A549 (cell line): ENCODE measurements at regions of chr7 and their contacts with region 1.

Region 1: GRCh38 chr7:141014524-141015395 is at the start of gene MRPS33:
- DNase-seq: peak; percentile 97 to 98
- ATAC-seq: peak; percentile 98 to 100
- H3K4me3 ChIP-seq: peak within 1 kb of the TSS; percentile 56
- H3K27ac ChIP-seq: peak within 1 kb of the TSS; percentile 85 to 88
- H3K4me1 ChIP-seq: peaks cover 13% of the 10 kb centered on the region
- CTCF ChIP-seq: peak; percentile 61
- EP300 ChIP-seq: no peak
- POLR2A ChIP-seq: peak; percentile 80
- RAD21 ChIP-seq: peak; percentile 14 to 50; a peak in 3 of 5 replicates
- polyA plus RNA-seq, gene MRPS33: 174 and 186 TPM in 2 replicates

Region 2: DNA sequence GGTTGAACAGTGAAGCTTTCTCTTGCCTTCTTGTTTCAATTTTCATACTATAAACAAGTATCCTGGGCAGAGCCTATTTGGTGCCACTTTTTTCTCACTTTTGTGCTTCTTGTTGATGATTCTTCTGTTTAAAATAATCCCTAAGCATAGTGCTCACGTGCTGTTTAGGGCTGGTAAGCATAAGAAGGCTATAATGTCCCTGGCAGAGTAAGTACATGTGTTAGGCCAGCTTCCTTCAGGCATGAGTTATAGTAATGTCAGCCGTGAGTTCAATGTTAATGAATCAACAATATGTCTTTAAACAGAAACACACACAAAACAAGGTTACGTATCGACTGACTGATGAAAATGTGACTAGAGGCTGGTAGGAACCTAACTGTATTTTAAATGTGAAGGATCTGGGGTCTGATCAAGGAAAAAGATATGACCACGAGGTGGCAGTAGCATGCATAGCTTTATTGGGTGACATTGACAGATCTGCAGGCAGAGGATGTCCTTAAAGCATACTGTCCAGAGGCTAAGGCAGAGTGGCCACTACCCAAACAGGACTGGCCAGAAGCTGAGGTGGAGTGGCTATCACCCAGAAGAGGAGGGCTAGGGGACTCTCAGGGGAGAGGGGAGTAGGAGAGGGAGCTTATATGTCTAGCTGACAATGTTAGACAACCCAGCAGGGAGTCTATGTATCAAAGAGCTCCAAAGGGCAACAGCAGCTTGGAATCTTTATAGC is 203.8 kb before region 1 on chr7:
- CTCF ChIA-PET with region 1: interaction called, 32 read pairs
- POLR2A ChIA-PET with region 1: interaction called, 15 read pairs
- DNase-seq: peak; percentile 52 to 75
- ATAC-seq: peak; percentile 100
- H3K4me3 ChIP-seq: no peak overlapping the region
- H3K27ac ChIP-seq: no peak overlapping the region
- H3K4me1 ChIP-seq: no peaks in the 10 kb centered on the region
- CTCF ChIP-seq: peak; percentile 85
- EP300 ChIP-seq: no peak
- POLR2A ChIP-seq: no peak
- RAD21 ChIP-seq: peak; percentile 76 to 81

Region 3: DNA sequence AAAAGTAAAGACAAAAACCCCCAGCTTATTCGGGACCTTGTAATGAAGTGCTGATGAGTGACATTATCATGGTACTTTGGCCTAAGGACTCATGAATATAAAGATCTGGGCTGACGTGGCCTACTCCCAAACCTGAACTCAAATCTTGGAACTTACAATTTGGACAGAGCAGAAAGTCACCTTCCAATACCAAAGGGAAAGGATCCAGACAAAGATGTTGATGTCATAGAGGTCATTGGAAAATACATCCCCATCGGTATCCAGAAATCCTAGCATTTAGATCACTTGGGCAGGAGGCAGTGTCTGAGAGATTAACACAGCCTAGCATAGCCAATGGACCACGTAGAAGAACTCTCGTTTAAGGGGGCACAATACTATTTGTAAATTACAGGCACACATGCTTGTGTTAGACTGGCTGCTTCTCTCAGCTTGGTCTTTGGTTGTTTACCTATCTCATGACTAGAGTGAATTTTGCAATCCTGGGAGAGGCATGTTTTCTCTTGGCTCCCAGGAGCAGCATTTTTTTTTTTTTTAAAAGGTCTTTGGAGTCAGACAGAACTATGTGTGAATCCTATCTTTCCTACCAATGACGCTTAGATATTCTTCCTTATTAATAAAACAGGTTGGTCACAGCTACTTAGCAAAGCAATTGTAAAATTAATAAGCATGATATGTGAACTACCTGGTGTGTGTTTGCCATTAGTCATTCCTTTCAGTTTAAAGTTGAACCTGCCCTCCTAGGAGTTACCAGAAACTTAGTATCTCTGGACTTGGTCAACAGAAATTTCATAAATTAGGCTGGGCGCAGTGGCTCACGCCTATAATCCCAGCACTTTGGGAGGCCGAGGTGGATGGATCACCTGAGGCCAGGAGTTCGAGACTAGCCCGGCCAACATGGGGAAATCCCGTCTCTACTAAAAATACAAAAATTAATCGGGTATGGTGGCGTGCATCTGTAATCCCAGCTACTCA is 27.7 kb after region 1 on chr7:
- CTCF ChIA-PET with region 1: interaction called, 3 read pairs
- POLR2A ChIA-PET with region 1: interaction called, 11 read pairs
- DNase-seq: peak; percentile 28 to 78
- ATAC-seq: peak; percentile 86 to 90
- H3K4me3 ChIP-seq: no peak overlapping the region
- H3K27ac ChIP-seq: peak overlapping the region; percentile 54 to 73
- H3K4me1 ChIP-seq: peaks cover 35% of the 10 kb centered on the region
- CTCF ChIP-seq: no peak
- EP300 ChIP-seq: no peak; a peak in 1 of 5 replicates
- POLR2A ChIP-seq: no peak
- RAD21 ChIP-seq: no peak

Region 4: DNA sequence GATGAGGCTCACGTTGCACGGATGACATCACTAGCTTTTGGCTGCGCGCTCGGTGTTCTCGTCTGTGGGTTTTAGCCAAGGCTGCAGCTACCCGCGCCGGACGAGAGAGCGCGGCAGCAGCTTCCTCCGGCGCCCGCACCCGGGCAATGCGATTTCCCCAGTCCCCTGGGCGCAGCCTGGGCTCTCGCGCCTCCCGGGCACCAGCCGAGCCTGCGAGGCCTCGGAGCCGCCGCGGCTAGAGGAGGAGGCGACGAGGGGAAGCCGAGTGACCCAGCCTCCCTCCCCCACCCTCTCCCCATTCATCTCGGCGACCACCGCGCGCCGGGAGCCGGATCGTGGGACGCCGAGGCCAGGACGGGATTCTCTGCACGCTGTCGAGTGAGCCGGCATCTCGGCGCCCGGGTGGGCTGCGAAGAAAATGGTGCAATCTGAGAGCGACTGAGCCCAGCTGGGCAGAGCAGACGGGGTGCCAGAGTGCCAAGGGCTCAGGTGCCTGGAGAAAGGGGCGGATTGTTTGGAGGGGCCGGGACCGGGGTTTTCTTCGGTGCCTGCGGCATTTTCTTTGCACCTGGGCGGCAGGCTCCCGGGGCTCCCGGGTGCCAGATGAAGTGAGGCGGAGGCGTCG is 57.9 kb after region 1 on chr7:
- CTCF ChIA-PET with region 1: no interaction called
- POLR2A ChIA-PET with region 1: interaction called, 14 read pairs
- DNase-seq: peak; percentile 38 to 61
- ATAC-seq: peak; percentile 68 to 81
- H3K4me3 ChIP-seq: peak overlapping the region; percentile 65
- H3K27ac ChIP-seq: peak overlapping the region; percentile 1 to 75; a peak in 4 of 6 replicates
- H3K4me1 ChIP-seq: peaks cover 13% of the 10 kb centered on the region; the same call in 2 of the 3 replicates
- CTCF ChIP-seq: no peak
- EP300 ChIP-seq: no peak
- POLR2A ChIP-seq: no peak
- RAD21 ChIP-seq: no peak